CD8-positive, alpha-beta memory T cell (primary cell): ENCODE measurements at regions of chr21 and their contacts with region 1.

Region 1: DNA sequence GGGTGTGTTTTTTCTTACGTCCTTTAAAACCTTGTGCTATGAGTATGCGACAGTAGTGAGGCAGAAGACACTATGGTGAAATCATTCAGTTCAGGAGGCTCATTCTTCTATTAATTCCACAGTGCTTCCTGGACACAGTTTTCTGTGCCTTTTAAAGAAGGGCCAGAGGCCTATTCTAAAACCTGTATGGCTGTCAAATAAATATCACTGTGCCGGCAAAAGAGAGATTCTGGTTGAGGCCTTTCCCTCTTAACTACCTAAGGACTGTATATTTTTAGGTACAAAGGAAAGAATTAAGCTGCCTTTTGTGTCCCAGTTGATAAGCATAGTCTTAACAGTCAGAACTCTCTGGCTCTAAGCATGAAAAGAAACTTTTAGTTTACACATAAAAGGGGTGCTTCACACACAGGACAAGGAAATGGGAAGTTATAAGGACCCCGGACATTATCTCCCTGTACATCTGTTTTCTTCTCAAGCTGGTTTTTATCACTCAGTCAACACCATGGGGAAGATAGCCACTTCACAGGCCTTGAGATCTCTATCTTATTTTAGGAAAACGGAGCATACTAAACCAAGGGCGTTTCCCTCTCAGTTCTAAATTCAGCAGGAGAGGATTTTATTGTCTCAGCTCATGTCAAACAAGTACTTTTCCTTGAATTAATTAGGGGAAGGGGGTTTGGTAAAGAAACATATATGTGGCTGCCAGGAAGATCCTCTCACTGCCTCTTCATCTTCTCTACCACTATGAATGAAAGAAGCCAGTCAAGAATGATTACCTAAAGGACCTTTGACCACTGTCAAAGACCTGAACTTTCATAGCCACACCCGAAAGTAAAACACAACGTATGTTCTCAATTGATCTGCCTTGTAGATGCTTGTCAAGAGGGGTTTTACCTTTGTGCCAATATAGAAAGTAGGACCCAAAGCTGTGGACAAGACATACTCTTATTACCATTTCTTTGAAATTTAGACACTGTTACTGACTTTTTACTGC is 71.4 kb upstream of the HSPA13 start:
- DNase-seq: no peak
- H3K4me3 ChIP-seq: no peak overlapping the region
- H3K4me3 Mint-ChIP-seq: no peak overlapping the region
- H3K27ac ChIP-seq: peak overlapping the region; percentile 83
- H3K27ac Mint-ChIP-seq: peak overlapping the region in 1 of 8 donors; percentile 18
- H3K4me1 ChIP-seq: no peaks in the 10 kb centered on the region
- H3K4me1 Mint-ChIP-seq: peaks cover 17 to 37% (median 37%) of the 10 kb centered on the region in 3 donors
- H3K27me3 ChIP-seq: no peaks in the 10 kb centered on the region
- H3K27me3 Mint-ChIP-seq: peaks cover 0 to 2% of the 10 kb centered on the region in 2 donors

Region 2: DNA sequence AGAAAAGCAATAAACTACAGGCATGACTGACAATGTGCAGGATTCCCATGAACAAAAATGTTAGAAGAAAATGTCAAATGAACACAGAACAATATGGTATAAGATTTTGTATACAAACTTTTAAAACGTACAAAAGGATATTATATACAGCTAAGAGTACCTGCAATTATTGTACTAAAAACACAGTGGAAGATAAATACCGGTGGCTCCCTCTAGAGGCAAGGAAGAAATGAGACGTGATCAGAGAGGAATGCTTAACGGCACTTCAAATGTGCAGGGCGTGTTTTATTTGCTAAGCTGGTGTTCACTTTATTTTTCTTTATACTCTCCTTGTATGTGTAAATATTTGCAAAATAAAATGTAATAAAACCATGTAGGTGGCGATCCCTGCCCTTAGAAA is 283.6 kb after region 1 on chr21:
- CTCF ChIA-PET with region 1: interaction called, 10 read pairs
- POLR2A ChIA-PET with region 1: no interaction called
- DNase-seq: peak; percentile 2 to 64 (median 57)
- H3K4me3 ChIP-seq: no peak overlapping the region
- H3K4me3 Mint-ChIP-seq: no peak overlapping the region
- H3K27ac ChIP-seq: no peak overlapping the region
- H3K27ac Mint-ChIP-seq: no peak overlapping the region
- H3K4me1 ChIP-seq: no peaks in the 10 kb centered on the region
- H3K4me1 Mint-ChIP-seq: peaks cover 5 to 18% (median 11%) of the 10 kb centered on the region in 3 donors
- H3K27me3 ChIP-seq: no peaks in the 10 kb centered on the region
- H3K27me3 Mint-ChIP-seq: peaks cover 2 to 6% of the 10 kb centered on the region in 2 donors